ENCODE measurements at regions of chr3 and their contacts with region 1.

Region 1: GRCh38 chr3:184325715-184326369 is 11.4 kb downstream of the EIF4G1 start:
- DNase-seq: no peak
- H3K4me3 ChIP-seq: no peak overlapping the region
- H3K27ac ChIP-seq: no peak overlapping the region
- H3K4me1 ChIP-seq: no peaks in the 10 kb centered on the region
- H3K27me3 ChIP-seq: no peaks in the 10 kb centered on the region
- CTCF ChIP-seq: no peak
- EP300 ChIP-seq: no peak
- POLR2A ChIP-seq: no peak
- RAD21 ChIP-seq: no peak

Region 2: GRCh38 chr3:184255291-184256039 is 70.4 kb before region 1 on chr3:
- CTCF ChIA-PET with region 1: no interaction called
- POLR2A ChIA-PET with region 1: no interaction called
- DNase-seq: no peak
- H3K4me3 ChIP-seq: no peak overlapping the region
- H3K27ac ChIP-seq: no peak overlapping the region
- H3K4me1 ChIP-seq: peaks cover 0 to 2% (median 1%) of the 10 kb centered on the region in 4 experiments; a peak in 4 of 7 replicates
- H3K27me3 ChIP-seq: peaks cover 2 to 24% (median 20%) of the 10 kb centered on the region in 4 experiments
- CTCF ChIP-seq: no peak
- EP300 ChIP-seq: no peak
- POLR2A ChIP-seq: no peak
- RAD21 ChIP-seq: no peak

Region 3: GRCh38 chr3:184305577-184305976 is 20.3 kb before region 1 on chr3:
- CTCF ChIA-PET with region 1: interaction called, 10 read pairs
- POLR2A ChIA-PET with region 1: interaction called, 148 read pairs
- DNase-seq: no peak
- H3K4me3 ChIP-seq: no peak overlapping the region
- H3K27ac ChIP-seq: no peak overlapping the region
- H3K4me1 ChIP-seq: no peaks in the 10 kb centered on the region
- H3K27me3 ChIP-seq: no peaks in the 10 kb centered on the region
- CTCF ChIP-seq: 0 out of 4 replicates have a peak, but pooled peaks of 1 of the 3 experiments have one; percentile 7
- EP300 ChIP-seq: no peak
- POLR2A ChIP-seq: no peak
- RAD21 ChIP-seq: no peak; a peak in 1 of 4 replicates

Region 4: GRCh38 chr3:184354121-184354728 is 28.4 kb after region 1 on chr3:
- CTCF ChIA-PET with region 1: interaction called, 3 read pairs
- POLR2A ChIA-PET with region 1: interaction called, 10 read pairs
- DNase-seq: peak in 1 of 2 experiments; percentile 85
- H3K4me3 ChIP-seq: no peak overlapping the region
- H3K27ac ChIP-seq: no peak overlapping the region
- H3K4me1 ChIP-seq: peaks cover 0 to 7% (median 3%) of the 10 kb centered on the region in 4 experiments; a peak in 2 of 7 replicates
- H3K27me3 ChIP-seq: no peaks in the 10 kb centered on the region
- CTCF ChIP-seq: peak in 2 of 3 experiments; percentile 60 to 74; a peak in 3 of 4 replicates
- EP300 ChIP-seq: no peak
- POLR2A ChIP-seq: no peak
- RAD21 ChIP-seq: peak; percentile 37 to 58; a peak in 3 of 4 replicates

Measured in H1 (cell line).